ENCODE measurements at regions of chr17 and their contacts with region 1.

Region 1: DNA sequence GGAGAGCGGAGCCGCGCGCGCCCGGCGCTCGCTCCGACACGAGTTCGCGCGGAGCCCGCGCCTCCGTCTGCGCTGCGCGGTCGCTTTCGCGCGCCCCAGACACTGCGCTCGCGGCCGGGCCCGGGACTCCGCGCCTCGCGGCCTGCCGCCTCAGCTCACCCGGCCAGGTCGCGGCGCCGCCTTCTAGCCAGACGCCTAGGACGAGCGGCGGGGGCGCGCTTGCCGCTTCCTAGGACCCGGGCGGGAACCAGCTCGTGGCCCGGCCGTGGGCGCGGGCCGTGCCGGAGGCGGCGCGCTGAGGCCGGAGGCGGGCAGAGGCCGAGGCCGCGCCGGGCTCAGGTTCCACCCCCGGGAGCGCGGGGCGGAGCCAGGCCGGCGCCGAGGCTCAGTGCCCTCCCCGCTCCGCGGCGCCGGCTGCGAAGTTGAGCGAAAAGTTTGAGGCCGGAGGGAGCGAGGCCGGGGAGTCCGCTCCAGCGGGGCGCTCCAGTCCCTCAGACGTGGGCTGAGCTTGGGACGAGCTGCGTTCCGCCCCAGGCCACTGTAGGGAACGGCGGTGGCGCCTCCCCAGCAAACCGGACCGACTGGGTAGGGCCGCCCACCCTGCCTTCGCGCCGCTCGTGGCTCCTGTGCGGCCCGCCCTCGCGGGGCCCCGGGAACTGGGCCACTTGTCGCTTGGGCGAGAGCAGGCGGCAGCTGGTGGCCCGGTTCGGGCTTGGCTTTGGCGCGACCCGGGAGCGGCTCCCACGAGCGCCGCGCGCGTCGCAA is at the start of gene SPHK1:
- DNase-seq: peak in 2 of 3 donors; percentile 54 to 64
- H3K4me3 ChIP-seq: peak within 1 kb of the TSS; percentile 40 to 75 (median 60)
- H3K27ac ChIP-seq: peak within 1 kb of the TSS in 1 of 2 experiments; percentile 34
- H3K4me1 ChIP-seq: peaks cover 0 to 56% (median 51%) of the 10 kb centered on the region in 4 experiments
- H3K27me3 ChIP-seq: peaks cover 0 to 13% (median 0%) of the 10 kb centered on the region in 5 experiments

Region 2: GRCh38 chr17:76304226-76305134 is 79.9 kb before region 1 on chr17:
- CTCF ChIA-PET with region 1: interaction called, 18 read pairs
- POLR2A ChIA-PET with region 1: no interaction called
- DNase-seq: no peak
- H3K4me3 ChIP-seq: no peak overlapping the region
- H3K27ac ChIP-seq: no peak overlapping the region
- H3K4me1 ChIP-seq: no peaks in the 10 kb centered on the region
- H3K27me3 ChIP-seq: no peaks in the 10 kb centered on the region

Region 3: DNA sequence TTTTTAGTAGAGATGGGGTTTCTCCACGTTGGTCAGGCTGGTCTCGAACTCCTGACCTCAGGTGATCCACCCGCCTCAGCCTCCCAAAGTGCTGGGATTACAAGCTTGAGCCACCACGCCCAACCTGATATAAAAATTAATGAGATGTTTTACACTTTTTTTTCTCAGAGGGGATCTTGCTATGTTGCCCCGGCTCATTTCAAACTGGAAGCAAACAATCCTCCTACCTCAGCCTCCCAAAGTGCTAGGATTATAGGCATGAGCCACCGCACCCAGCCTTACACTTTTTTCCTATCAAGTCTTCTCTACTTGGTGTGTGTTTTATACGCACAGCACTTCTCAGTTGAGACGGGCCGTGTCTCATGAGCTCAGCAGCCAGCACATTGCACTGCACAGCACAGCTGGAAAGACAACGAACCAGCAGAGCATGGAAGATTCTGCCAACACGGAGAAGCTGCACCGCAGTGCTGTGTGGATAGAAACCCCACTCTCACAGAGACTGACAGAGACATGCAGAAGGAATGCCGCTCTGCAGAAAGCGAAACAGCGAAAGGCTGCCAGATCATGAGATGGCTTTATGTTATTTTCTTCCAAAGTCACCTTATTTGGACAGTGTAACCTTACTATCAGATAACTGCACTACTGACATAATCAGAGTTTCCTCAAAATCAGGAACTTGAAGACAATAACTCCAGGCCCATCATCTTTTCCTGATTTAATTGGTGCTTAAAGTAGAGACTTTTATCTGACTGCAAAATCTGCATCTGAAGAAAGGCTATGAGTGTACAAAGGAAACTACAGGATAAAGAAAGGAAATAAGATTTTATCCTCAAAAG is 69.8 kb before region 1 on chr17:
- CTCF ChIA-PET with region 1: no interaction called
- POLR2A ChIA-PET with region 1: no interaction called
- DNase-seq: peak in 1 of 3 donors; percentile 6
- H3K4me3 ChIP-seq: no peak overlapping the region
- H3K27ac ChIP-seq: no peak overlapping the region
- H3K4me1 ChIP-seq: peaks cover 0 to 9% (median 2%) of the 10 kb centered on the region in 4 experiments
- H3K27me3 ChIP-seq: no peaks in the 10 kb centered on the region

Region 4: GRCh38 chr17:76353599-76354316 is 30.6 kb before region 1 on chr17 and contains the start of gene PRPSAP1:
- CTCF ChIA-PET with region 1: interaction called, 41 read pairs
- POLR2A ChIA-PET with region 1: interaction called, 12 read pairs
- DNase-seq: peak; percentile 86 to 92 (median 91)
- H3K4me3 ChIP-seq: peak within 1 kb of the TSS; percentile 73 to 91 (median 83)
- H3K27ac ChIP-seq: peak within 1 kb of the TSS; percentile 97 to 99
- H3K4me1 ChIP-seq: peaks cover 0 to 21% (median 17%) of the 10 kb centered on the region in 4 experiments
- H3K27me3 ChIP-seq: no peaks in the 10 kb centered on the region

Region 5: GRCh38 chr17:76370261-76370993 is 14.0 kb before region 1 on chr17:
- CTCF ChIA-PET with region 1: interaction called, 48 read pairs
- POLR2A ChIA-PET with region 1: interaction called, 7 read pairs
- DNase-seq: peak in 1 of 3 donors; percentile 14
- H3K4me3 ChIP-seq: no peak overlapping the region
- H3K27ac ChIP-seq: no peak overlapping the region
- H3K4me1 ChIP-seq: peaks cover 0 to 5% (median 4%) of the 10 kb centered on the region in 4 experiments
- H3K27me3 ChIP-seq: no peaks in the 10 kb centered on the region